Mammary epithelial cell (primary cell): ENCODE measurements at regions of chr9 and their contacts with region 1.

Region 1: DNA sequence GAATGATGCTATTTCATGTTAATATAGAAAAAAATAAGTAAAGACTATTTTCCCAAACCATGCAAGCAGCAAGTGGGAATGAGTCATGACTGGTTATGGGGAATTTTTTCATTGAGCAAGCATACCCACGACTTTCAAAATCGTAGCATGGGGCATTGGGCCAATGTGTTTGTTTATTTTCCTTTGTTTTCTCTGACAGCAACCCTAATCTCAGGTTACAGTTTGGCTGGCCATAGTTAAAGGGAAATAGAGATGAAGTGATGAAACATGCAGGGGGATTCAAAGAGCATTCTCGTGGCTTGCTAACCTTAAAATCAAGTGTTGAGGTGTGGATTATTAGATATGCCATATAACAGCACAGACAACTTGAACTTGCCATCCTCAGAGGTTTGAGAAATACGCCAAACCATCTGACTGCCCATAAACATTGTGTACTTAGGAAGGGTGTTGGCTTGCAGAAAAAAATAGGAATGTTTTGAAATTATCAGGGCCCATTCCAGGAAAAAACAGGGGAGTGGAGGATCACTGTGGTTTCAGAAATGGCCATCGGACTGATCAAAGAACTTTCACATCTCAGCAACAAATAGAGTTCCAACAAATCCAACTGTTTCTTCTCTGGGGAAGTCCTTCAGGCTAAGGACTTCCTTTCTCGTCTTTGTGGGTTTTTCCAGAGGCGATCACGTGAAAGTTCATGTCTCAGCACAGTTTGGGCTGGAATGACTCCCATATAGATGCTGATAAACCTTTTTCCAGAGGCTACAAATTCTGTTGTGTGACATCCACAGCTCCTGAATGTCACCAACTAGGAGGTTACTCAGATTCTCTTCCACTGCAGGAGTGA is 259.1 kb downstream of the SYK start:
- DNase-seq: peak; percentile 97
- H3K4me3 ChIP-seq: peak overlapping the region in 1 of 3 experiments; percentile 10
- H3K27ac ChIP-seq: peak overlapping the region; percentile 80
- H3K4me1 ChIP-seq: peaks cover 19% of the 10 kb centered on the region
- H3K27me3 ChIP-seq: no peaks in the 10 kb centered on the region
- CTCF ChIP-seq: no peak

Region 2: GRCh38 chr9:91017226-91017625 is 43.5 kb before region 1 on chr9:
- CTCF ChIA-PET with region 1: no interaction called
- dilution Hi-C with region 1: loop called (anchors 5 kb)
- in situ Hi-C with region 1: no loop called
- intact Hi-C with region 1: no loop called
- DNase-seq: no peak
- H3K4me3 ChIP-seq: no peak overlapping the region
- H3K27ac ChIP-seq: no peak overlapping the region
- H3K4me1 ChIP-seq: peaks cover 3% of the 10 kb centered on the region
- H3K27me3 ChIP-seq: no peaks in the 10 kb centered on the region
- CTCF ChIP-seq: no peak

Region 3: DNA sequence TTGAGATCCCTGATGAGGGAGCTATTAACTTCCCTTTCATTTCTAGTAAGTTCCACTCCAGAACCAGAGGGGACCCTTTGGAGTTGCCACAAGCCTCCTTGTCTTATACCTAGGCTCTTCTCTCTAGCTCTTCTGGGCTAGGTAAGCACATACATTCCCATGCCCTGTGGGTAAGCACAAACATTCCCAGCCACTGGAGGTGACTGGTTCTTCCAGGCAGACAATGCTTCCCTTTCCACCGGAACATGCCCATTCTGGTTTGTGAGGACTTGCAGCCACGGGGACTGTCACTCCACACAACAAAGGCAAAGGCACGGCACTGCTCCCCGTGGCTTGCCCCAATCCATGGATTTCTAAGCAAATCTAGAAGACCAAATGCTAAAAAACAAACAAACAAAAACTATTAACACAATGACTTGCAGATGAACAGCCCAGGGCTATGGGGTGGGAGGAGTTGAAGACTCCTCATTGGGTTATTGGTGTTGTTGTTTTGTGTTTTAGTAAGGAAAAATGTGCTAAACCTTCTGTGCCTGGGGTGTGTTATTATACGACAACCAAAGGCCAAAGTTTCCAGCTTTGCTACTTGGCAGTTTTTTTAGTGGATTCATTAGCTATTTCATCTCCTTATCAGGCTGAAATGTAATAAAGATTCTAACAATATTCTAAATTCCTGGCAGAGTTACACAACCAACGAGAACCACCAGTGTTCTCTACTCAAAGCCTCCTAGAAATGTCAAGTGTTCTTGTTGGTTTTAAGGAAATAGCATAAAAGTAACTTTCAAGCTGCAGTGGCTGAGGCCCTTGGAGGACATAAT is 17.1 kb after region 1 on chr9:
- CTCF ChIA-PET with region 1: no interaction called
- dilution Hi-C with region 1: no loop called
- in situ Hi-C with region 1: no loop called
- intact Hi-C with region 1: no loop called
- DNase-seq: no peak
- H3K4me3 ChIP-seq: no peak overlapping the region
- H3K27ac ChIP-seq: no peak overlapping the region
- H3K4me1 ChIP-seq: no peaks in the 10 kb centered on the region
- H3K27me3 ChIP-seq: no peaks in the 10 kb centered on the region
- CTCF ChIP-seq: no peak